ENCODE measurements at regions of chr2 and their contacts with region 1.

Region 1: DNA sequence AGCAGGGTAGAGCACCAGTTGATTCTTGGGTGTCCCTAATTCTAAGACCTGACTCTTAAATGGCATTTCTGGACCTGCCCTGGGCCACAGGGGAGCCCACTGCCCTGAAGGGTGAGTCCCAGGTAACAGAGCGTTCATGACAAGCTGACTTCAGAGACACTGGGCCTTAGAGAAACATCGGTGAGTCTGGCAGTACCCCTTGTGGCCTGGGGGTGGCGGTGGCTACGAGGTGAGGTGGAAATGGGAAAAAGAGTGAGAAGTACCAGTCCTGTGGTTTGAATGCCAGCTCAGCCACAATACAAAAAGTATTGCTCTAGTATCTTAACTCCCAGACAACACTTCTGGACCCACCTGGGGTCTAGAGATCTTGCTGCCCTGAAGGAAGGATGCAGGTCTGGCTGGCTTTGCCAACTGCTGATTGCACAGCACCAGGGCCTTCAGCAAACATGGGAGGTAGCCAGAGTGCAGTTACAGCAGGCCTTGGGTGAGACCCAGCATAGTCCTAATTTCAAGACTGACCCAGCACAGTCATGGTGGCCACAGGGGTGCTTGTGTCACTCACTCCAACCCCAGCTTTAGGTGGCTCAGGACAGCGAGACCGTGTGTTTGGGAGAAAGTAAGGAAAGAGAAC is 44.5 kb downstream of the USP34 start:
- DNase-seq: peak; percentile 84
- H3K4me3 Mint-ChIP-seq: no peak overlapping the region
- H3K27ac Mint-ChIP-seq: peak overlapping the region; percentile 64
- H3K4me1 Mint-ChIP-seq: peaks cover 57% of the 10 kb centered on the region
- H3K27me3 Mint-ChIP-seq: no peaks in the 10 kb centered on the region

Region 2: DNA sequence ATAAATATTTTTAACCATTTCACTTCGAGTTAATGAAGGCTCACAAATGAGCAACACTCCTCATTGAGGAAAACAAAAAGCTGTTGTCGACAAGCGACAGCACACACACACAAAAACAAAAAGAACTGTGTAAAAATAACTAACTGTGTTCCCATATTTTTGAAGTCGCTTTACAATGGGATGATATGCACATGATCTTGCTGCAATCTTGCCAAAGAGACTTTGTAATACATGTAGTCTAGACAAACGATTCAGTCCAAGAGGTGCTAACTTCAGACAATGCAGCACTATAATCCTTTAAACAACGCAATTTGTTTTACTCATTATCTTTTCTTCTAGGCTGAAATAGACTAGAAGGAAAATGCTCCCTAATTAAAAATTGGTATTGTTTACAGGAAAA is 51.7 kb after region 1 on chr2:
- CTCF ChIA-PET with region 1: interaction called, 10 read pairs
- POLR2A ChIA-PET with region 1: no interaction called
- intact Hi-C with region 1: no loop called
- DNase-seq: no peak
- H3K4me3 Mint-ChIP-seq: no peak overlapping the region
- H3K27ac Mint-ChIP-seq: peak overlapping the region; percentile 8
- H3K4me1 Mint-ChIP-seq: no peaks in the 10 kb centered on the region
- H3K27me3 Mint-ChIP-seq: no peaks in the 10 kb centered on the region

Region 3: DNA sequence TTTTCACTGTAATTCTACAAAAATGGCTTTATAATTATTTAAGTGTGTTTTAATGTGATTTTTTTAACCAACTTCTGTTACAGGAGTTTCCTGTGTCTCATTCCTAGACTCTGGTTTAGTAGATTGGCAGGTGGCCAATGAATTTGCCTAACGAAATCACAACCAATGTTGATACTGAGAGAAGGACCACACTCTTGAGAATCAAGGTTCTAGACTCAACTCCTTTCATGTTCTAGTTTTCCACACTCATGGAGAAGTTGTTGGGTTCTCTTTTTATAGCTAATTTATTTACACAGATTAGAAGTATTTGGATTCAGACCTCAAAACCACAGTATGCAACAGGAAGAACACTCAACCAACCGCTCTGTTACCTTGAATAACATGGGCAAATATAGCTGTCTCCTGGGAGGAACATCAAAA is 67.2 kb after region 1 on chr2:
- CTCF ChIA-PET with region 1: interaction called, 10 read pairs
- POLR2A ChIA-PET with region 1: no interaction called
- intact Hi-C with region 1: no loop called
- DNase-seq: no peak
- H3K4me3 Mint-ChIP-seq: no peak overlapping the region
- H3K27ac Mint-ChIP-seq: peak overlapping the region; percentile 81
- H3K4me1 Mint-ChIP-seq: peaks cover 20% of the 10 kb centered on the region
- H3K27me3 Mint-ChIP-seq: no peaks in the 10 kb centered on the region

Region 4: DNA sequence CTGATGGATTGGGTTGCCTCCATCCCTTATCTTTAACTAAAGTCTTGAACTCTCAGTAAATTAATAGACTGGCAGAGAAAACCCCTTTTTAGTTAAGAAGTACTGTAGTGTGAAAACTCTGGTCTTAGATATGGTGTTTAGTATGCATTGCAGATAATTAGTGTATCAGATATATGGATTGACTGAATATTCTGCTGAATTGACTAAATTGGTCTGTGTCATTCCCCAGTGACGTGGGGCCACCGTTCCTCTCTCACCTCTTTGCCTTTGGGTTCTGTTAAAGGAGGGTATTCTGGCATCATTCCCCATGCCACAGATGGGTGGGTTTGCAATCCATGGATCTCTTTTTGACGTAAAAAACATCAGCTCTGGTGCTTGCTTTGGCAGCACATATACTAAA is 178.9 kb after region 1 on chr2:
- CTCF ChIA-PET with region 1: no interaction called
- POLR2A ChIA-PET with region 1: no interaction called
- intact Hi-C with region 1: no loop called
- DNase-seq: no peak
- H3K4me3 Mint-ChIP-seq: no peak overlapping the region
- H3K27ac Mint-ChIP-seq: no peak overlapping the region
- H3K4me1 Mint-ChIP-seq: no peaks in the 10 kb centered on the region
- H3K27me3 Mint-ChIP-seq: no peaks in the 10 kb centered on the region

Region 5: DNA sequence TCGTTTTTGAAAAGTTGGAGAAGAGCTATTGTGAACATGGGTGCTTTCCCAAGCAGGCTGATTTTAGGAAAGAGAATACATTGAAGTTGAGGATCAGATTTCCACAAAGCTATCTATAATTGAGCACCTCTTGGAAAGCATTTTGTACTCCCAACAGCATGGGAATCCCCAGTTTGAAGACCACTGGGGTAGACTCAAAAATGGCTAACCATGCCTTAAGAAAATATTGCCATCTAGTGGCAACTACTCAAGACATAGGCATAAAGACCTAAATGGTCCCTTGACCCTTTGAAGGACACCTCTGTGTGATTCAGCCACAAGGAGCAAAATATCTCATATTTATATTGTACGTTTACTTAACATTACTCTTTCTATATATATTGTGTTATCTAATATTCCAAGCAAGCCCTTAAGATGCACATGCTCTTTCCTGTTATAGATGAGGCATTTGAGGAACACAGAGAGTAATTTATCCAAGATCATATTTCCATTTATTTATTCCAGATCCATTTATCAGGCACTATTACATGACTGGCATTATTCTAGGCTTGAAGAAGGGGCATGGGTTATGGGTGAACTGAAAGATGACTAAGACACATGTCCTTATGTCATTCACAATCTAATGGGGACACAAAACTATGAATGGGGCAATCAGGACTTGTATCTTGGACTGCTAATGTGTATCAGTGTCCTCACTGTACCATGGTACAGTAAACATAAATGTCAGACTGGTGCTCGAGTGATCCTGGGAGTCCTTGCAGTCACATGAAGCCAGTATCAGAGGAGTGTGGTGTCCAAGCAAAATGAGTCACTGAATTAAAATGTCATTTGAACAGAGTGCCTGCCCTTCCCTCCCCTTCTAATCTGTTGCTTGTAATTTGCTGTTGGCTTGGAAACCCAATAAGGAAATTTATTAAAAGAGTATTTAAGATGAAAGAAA is 232.7 kb after region 1 on chr2:
- CTCF ChIA-PET with region 1: interaction called, 7 read pairs
- POLR2A ChIA-PET with region 1: no interaction called
- intact Hi-C with region 1: loop called (anchors 5 kb)
- DNase-seq: no peak
- H3K4me3 Mint-ChIP-seq: no peak overlapping the region
- H3K27ac Mint-ChIP-seq: no peak overlapping the region
- H3K4me1 Mint-ChIP-seq: peaks cover 4% of the 10 kb centered on the region
- H3K27me3 Mint-ChIP-seq: no peaks in the 10 kb centered on the region